Calu3 (cell line): ENCODE measurements at regions of chr1 and their contacts with region 1.

Region 1: DNA sequence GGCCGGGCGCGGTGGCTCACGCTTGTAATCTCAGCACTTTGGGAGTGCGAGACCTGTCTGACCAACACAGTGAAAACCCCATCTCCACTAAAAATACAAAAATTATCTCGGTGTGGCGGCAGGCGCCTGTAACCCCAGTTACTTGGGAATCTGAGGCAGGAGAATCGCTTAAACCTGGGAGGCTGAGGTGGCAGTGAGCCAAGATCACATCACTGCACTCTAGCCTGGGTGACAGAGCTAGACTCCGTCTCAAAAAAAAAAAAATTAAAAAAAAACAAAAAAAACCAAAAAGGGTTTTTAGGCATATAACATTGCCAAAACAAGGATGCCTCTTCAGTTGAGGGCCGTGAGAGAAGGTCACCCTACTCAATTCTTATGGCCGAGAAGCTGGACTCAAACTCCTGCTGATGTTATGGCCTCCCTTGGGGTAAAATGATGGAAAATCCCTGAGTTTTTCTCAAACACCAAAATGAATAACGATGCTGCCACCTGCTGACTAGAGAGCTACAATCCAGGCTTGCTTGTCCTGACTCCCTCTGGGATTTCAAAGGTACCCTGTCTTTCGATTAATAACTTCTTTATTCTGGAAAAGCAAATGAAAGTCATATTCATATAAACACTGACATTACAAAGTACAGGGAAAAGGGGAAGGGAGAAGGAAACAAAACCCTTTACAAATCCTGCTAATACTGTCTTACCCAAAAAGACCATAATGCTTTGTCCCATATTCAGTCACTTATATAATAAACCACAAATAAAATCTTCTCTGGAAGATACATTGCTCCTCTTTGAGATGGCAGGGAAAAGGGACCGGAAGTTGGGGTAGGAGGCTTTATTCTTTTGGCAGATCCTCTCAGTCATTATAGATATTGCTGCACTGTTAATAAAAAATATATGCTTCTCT is 10.7 kb downstream of the RAB42 start:
- DNase-seq: peak; percentile 66
- H3K4me3 Mint-ChIP-seq: no peak overlapping the region
- H3K27ac Mint-ChIP-seq: no peak overlapping the region
- H3K4me1 Mint-ChIP-seq: peaks cover 25% of the 10 kb centered on the region
- H3K27me3 Mint-ChIP-seq: no peaks in the 10 kb centered on the region
- CTCF ChIP-seq: peak; percentile 57

Region 2: DNA sequence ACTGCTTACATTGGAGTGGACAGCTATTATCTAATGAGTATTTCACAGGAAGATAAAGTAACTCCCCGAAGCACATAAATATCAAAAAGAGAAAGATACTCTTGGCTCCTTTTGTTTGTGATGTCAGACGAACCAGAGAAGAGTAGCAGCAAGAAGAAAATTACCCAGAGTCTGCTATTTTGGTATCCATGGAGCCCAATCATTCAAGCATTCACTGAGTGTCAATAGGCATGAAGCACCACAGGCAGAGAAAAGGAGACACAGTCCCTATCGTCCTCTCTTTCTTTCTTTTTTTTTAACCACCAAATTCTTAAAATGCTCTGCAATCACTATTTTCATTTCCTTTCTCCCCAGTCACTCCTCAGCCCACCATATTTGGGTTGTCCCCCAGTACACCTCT is 708.3 kb before region 1 on chr1:
- CTCF ChIA-PET with region 1: interaction called, 12 read pairs
- intact Hi-C with region 1: no loop called
- DNase-seq: no peak
- H3K4me3 Mint-ChIP-seq: no peak overlapping the region
- H3K27ac Mint-ChIP-seq: no peak overlapping the region
- H3K4me1 Mint-ChIP-seq: no peaks in the 10 kb centered on the region
- H3K27me3 Mint-ChIP-seq: no peaks in the 10 kb centered on the region
- CTCF ChIP-seq: no peak

Region 3: DNA sequence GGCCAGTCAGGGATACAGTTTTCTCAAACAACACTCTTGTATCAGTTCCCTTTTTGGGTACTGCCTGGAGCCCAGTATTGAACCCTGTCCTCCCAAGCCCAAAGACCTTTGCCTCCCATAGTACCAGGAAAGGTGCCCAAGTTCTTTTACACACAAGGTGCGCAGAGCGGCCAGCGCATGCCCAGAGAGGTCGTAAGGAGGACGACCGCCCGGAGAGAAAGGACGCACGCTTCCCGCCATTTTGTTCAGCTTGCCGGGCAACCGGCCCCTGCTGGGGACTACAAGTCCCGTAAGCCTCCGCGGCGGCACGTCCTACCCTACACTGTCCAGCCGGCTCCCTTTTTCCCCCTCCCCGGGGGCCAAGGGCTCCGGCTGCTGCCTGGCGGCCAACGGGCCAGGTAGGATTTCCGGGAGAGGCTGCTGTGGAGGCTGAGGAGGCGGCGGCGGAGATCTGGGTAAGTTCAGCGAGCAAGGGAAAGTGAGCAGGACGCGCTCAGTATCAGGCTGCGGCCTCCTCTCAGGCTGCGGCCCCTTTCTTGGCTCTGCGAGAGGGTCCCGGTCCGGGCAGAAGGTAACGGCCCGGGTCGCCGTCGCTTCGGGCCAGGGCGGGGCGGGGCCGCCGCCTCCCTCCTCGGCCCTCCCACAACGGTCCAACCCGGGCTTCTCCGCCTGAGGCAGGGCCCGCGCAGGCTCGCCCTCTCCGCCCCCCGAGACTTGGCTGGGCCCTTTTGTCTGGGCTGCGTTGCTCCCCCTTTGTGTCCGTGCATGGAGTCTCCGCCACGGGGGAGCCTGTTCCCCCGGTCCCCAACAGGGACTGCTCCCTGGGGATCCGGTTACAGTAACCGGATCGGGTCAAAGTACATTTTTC is 233.2 kb before region 1 on chr1 and contains the start of gene PHACTR4:
- CTCF ChIA-PET with region 1: no interaction called
- intact Hi-C with region 1: loop called (anchors 10 kb)
- DNase-seq: peak; percentile 96
- H3K4me3 Mint-ChIP-seq: peak within 1 kb of the TSS; percentile 90
- H3K27ac Mint-ChIP-seq: peak within 1 kb of the TSS; percentile 88
- H3K4me1 Mint-ChIP-seq: peaks cover 30% of the 10 kb centered on the region
- H3K27me3 Mint-ChIP-seq: no peaks in the 10 kb centered on the region
- CTCF ChIP-seq: no peak
- total RNA-seq, gene PHACTR4: 58.0 and 58.7 TPM in 2 replicates

Region 4: DNA sequence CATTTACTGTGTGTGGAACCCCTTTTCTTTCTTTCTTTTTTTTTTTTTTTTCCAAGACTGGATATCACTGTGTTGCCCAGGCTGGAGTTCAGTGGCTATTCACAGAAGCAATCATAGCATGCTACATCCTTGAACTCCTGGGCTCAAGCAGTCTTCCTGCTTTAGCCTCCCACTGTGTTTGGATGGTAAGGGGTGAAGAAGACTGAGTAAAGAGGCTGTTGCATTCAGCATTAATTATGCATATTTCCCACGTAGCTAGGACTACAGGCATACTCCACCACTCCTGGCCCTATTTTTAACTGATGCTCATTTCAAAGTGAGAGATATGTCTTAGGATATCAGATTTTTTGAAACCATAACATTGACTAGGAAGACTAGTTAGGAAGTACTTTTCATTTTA is 193.7 kb before region 1 on chr1:
- CTCF ChIA-PET with region 1: interaction called, 3 read pairs
- intact Hi-C with region 1: loop called (anchors 5 kb)
- DNase-seq: no peak
- H3K4me3 Mint-ChIP-seq: no peak overlapping the region
- H3K27ac Mint-ChIP-seq: no peak overlapping the region
- H3K4me1 Mint-ChIP-seq: peaks cover 16% of the 10 kb centered on the region
- H3K27me3 Mint-ChIP-seq: no peaks in the 10 kb centered on the region
- CTCF ChIP-seq: no peak

Region 5: DNA sequence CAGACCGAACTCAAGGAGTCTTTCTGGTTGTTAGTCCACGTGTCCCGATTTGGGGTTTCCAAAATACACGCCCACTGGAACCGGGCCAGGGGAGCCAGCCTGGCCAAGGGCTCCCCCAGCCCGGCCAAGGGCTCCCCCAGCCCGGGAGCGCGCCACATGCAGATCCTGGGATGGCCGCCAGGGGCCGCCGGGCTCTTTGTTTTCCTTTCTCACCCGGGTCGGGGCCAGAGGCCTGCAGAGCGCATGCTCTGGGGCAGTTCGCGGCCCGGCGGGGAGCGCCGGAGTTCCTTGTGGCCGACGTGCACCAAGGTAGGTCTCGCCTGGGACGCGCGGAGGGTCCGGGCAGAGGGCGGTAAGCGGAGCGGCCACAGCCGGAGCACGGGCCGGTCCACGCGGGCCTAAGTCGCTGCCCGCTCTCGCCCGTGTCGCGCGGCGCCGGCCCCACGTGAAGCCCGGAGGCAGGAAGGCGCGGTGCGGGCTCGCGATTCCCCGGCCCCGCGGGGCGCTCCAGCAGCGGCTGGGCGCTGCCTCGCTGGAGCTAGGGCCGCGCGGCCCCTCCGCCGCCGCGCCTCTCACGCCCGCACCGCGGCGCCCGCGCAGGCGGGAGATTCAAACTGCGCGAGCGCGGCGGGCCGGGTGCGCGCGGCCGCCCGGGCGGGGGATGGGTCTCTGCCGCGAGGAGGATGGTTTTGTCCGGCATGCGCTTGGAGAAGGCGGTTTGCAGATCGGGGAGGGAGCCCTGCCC is 84.6 kb before region 1 on chr1:
- CTCF ChIA-PET with region 1: interaction called, 5 read pairs
- intact Hi-C with region 1: loop called (anchors 1 kb)
- DNase-seq: peak; percentile 93
- H3K4me3 Mint-ChIP-seq: peak overlapping the region; percentile 77
- H3K27ac Mint-ChIP-seq: peak overlapping the region; percentile 29
- H3K4me1 Mint-ChIP-seq: peaks cover 45% of the 10 kb centered on the region
- H3K27me3 Mint-ChIP-seq: no peaks in the 10 kb centered on the region
- CTCF ChIP-seq: peak; percentile 98

Region 6: GRCh38 chr1:28581536-28582247 is 21.1 kb before region 1 on chr1:
- CTCF ChIA-PET with region 1: interaction called, 21 read pairs
- intact Hi-C with region 1: no loop called
- DNase-seq: peak; percentile 96
- H3K4me3 Mint-ChIP-seq: peak overlapping the region; percentile 95
- H3K27ac Mint-ChIP-seq: peak overlapping the region; percentile 93
- H3K4me1 Mint-ChIP-seq: peaks cover 32% of the 10 kb centered on the region
- H3K27me3 Mint-ChIP-seq: no peaks in the 10 kb centered on the region
- CTCF ChIP-seq: no peak